Activated CD4-positive, alpha-beta memory T cell treated with anti-CD3 and anti-CD28 coated beads for 36 hours (primary cell): ENCODE measurements at regions of chr11 and their contacts with region 1.

Region 1: DNA sequence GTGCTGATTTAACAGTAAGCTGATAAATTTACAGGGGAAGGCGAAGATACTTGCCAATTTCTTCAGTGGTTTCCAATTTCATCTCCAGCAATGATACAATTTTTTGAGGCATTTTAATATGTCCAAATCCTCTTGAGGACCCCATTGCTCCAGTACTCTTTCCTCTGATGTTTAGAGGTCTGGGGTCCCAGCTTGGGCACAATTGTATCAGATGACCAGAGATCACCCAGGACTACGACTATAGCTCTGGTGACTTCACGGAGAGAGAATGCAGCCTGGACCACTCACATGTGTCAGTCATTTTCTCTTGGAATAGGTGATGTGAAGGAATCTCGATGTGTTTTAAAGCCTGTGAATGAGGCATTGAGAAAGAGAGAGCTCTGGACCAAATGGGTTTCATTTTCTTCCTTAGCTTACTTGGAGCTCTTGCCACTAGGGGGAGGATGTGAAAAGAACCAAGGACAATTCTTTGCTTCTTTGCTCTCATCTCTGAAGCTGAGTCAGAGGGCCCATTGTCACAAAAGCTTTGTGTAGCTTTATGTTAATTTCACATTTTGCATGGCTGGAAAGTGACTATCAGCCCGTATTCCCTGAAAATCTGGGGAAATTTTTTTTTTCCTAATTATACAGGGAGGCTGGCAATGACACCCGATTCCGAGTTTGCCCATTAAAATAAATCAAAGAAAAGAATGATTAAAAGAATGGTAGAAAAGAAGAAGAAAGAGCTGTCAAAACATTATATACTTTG is 6.7 kb upstream of the CCDC90B start:
- DNase-seq: no peak
- H3K4me3 Mint-ChIP-seq: peak overlapping the region; percentile 44
- H3K27ac Mint-ChIP-seq: no peak overlapping the region
- H3K4me1 Mint-ChIP-seq: peaks cover 10% of the 10 kb centered on the region
- H3K27me3 Mint-ChIP-seq: no peaks in the 10 kb centered on the region

Region 2: GRCh38 chr11:83275888-83276641 is 16.8 kb before region 1 on chr11:
- CTCF ChIA-PET with region 1: interaction called, 11 read pairs
- POLR2A ChIA-PET with region 1: no interaction called
- intact Hi-C with region 1: no loop called
- DNase-seq: no peak
- H3K4me3 Mint-ChIP-seq: no peak overlapping the region
- H3K27ac Mint-ChIP-seq: no peak overlapping the region
- H3K4me1 Mint-ChIP-seq: peaks cover 3% of the 10 kb centered on the region
- H3K27me3 Mint-ChIP-seq: no peaks in the 10 kb centered on the region

Region 3: GRCh38 chr11:83724008-83724461 is 431.2 kb after region 1 on chr11:
- CTCF ChIA-PET with region 1: interaction called, 9 read pairs
- POLR2A ChIA-PET with region 1: no interaction called
- intact Hi-C with region 1: loop called (anchors 1 kb)
- DNase-seq: peak; percentile 13
- H3K4me3 Mint-ChIP-seq: peak overlapping the region; percentile 43
- H3K27ac Mint-ChIP-seq: no peak overlapping the region
- H3K4me1 Mint-ChIP-seq: peaks cover 7% of the 10 kb centered on the region
- H3K27me3 Mint-ChIP-seq: peaks cover 12% of the 10 kb centered on the region

Region 4: GRCh38 chr11:83819933-83820549 is 527.2 kb after region 1 on chr11:
- CTCF ChIA-PET with region 1: interaction called, 51 read pairs
- POLR2A ChIA-PET with region 1: no interaction called
- intact Hi-C with region 1: loop called (anchors 1 kb)
- DNase-seq: no peak
- H3K4me3 Mint-ChIP-seq: no peak overlapping the region
- H3K27ac Mint-ChIP-seq: no peak overlapping the region
- H3K4me1 Mint-ChIP-seq: no peaks in the 10 kb centered on the region
- H3K27me3 Mint-ChIP-seq: peaks cover 2% of the 10 kb centered on the region